Breast epithelium (tissue), 4 donors: ENCODE measurements at regions of chr12 and their contacts with region 1.

Region 1: GRCh38 chr12:27396216-27396815 is 50.2 kb upstream of the SMCO2 start:
- DNase-seq: no peak
- H3K4me3 ChIP-seq: no peak overlapping the region
- H3K27ac ChIP-seq: no peak overlapping the region
- H3K4me1 ChIP-seq: no peaks in the 10 kb centered on the region
- H3K27me3 ChIP-seq: no peaks in the 10 kb centered on the region
- CTCF ChIP-seq: no peak
- POLR2A ChIP-seq: no peak

Region 2: DNA sequence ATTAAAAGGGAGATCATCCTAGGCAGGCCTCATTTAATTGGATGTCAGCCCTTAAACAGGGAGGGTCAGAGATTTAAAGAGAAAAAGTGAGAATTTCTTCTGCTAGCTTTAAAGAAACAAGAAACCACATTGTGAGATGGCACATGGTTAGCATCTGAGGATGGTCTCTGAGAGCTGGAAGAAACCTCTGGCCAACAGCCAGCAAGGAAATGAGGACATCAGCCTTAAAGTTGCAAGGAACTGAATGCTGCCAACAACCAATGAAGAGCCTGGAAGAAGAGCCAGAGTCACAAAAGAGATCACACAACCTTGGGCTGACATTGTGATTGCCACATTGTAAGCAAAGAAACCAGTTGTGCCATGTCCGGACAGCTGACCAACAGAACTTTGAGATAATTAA is 1735.2 kb after region 1 on chr12:
- intact Hi-C with region 1: loop called (anchors 10 kb)
- DNase-seq: no peak
- H3K4me3 ChIP-seq: no peak overlapping the region
- H3K27ac ChIP-seq: no peak overlapping the region
- H3K4me1 ChIP-seq: no peaks in the 10 kb centered on the region
- H3K27me3 ChIP-seq: no peaks in the 10 kb centered on the region
- CTCF ChIP-seq: no peak
- POLR2A ChIP-seq: no peak

Region 3: DNA sequence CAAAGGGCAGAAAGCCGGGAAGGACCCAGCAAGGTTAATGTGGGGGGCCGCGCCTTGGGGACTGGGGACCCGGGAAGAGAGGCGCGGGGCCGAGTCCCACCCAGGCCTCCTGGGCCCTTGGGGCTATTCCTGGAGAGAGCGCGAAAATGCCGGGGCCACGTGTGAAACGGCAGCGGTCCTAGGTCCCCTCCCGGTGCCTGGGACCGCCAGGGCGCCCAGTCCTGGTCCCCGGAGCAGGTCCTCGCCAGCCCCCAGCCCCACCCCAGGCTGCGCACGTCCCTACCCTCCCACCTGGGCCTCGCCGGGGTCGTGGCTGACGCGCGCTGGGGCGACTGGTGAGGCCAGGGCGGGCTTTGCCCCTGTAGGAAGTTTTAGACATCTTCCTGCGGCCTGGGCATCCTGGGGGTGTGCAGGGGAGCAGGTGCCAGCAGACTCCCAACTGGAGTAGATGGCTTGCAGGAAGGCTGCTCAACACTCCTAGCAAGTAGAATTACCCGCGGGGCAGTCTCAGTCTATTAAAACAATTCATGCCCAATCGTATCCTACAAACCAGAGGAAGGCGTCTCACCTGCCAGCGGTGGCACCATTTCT is 1753.5 kb after region 1 on chr12:
- intact Hi-C with region 1: loop called (anchors 10 kb)
- DNase-seq: no peak
- H3K4me3 ChIP-seq: peak overlapping the region; percentile 63 to 96 (median 80)
- H3K27ac ChIP-seq: peak overlapping the region; percentile 80 to 92
- H3K4me1 ChIP-seq: peaks cover 6 to 9% of the 10 kb centered on the region in 2 donors
- H3K27me3 ChIP-seq: no peaks in the 10 kb centered on the region
- CTCF ChIP-seq: no peak
- POLR2A ChIP-seq: no peak